ENCODE measurements at regions of chr13 and their contacts with region 1.

Region 1: DNA sequence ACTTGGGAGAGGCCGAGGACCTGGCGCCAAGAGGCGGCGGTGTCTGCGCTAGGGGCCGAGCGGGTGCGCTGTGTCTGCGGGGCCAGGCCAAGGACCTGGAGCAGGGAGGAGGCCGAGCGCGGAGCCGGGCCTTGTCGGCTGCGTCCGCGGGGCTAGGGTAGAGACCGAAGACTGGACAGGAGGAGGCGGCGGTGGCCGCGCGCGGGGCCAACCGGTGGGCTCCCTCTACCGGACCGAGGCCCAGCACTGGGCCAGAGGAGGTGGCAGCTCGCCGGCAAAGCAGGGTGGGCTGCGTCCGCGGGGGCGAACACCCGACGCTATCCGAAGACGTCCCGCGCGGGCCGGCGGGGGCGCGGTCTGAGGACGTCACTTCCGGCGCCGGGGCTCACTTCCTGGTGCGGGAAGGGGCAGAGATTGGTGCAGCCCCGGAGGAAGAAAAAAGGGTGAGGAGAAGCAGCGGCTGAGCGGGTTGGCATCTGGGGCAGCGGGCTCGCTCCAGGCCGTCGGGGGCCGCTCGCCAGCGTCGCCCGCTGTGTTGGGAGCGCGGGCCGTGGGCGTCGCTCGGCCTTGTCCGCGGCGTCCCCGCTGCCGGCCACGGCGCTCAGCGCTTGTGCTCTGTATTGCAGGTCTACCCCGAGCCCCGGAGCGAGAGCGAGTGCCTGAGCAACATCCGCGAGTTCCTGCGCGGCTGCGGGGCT is 38.3 kb downstream of the ARHGEF7 start:
- DNase-seq: peak; percentile 89
- ATAC-seq: peak; percentile 91
- H3K4me3 ChIP-seq: peak overlapping the region; percentile 80
- H3K27ac ChIP-seq: peak overlapping the region; percentile 90
- H3K4me1 ChIP-seq: peaks cover 7% of the 10 kb centered on the region
- H3K27me3 ChIP-seq: peaks cover 7% of the 10 kb centered on the region; the same call in 1 of the 2 replicates
- CTCF ChIP-seq: peak; percentile 49
- POLR2A ChIP-seq: peak; percentile 85; the same call in 1 of the 2 replicates
- RAD21 ChIP-seq: peak; percentile 33

Region 2: GRCh38 chr13:110037925-110038573 is 1115.4 kb before region 1 on chr13:
- CTCF ChIA-PET with region 1: no interaction called
- POLR2A ChIA-PET with region 1: no interaction called
- dilution Hi-C with region 1: no loop called
- in situ Hi-C with region 1: no loop called
- intact Hi-C with region 1: no loop called
- DNase-seq: no peak
- ATAC-seq: no peak
- H3K4me3 ChIP-seq: no peak overlapping the region
- H3K27ac ChIP-seq: no peak overlapping the region
- H3K4me1 ChIP-seq: peaks cover 7% of the 10 kb centered on the region
- H3K27me3 ChIP-seq: no peaks in the 10 kb centered on the region
- CTCF ChIP-seq: no peak
- POLR2A ChIP-seq: no peak
- RAD21 ChIP-seq: no peak

Region 3: DNA sequence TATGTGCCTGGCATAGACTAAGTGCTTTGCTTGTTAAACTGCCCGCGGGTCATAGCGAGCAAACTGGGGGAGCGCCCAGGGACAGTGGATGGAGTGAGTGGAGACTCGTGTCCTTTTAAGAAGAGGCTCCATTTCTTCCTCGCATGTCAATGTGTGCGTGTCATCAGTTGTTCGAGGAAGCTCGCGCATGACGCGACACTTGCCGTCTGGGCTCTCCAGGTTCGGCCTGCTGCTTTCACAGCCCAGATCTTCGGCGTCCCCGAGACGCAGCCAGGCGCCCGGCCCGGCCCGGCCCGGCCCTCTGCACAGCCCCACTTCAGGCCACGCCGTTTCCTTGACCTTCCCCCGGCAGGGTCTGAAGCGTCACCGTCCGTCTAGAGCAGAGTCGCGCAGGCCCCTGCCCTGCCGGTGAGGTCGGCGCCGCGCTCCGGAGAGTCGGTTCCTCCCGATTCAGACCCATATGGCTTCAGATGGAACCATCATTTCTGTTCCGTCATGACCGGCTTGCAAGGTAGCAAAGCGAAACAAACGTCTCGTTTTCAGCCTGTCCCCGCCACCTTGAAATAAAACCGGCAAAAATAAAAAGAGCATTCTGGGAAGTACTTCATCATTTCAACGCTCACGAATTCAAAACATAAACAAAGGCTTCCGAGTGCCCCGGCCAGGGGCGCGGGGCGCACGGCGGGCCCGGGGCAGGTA is 38.9 kb before region 1 on chr13:
- CTCF ChIA-PET with region 1: no interaction called
- POLR2A ChIA-PET with region 1: no interaction called
- dilution Hi-C with region 1: no loop called
- in situ Hi-C with region 1: no loop called
- intact Hi-C with region 1: loop called (anchors 1 kb)
- DNase-seq: peak; percentile 43
- ATAC-seq: peak; percentile 46
- H3K4me3 ChIP-seq: peak overlapping the region; percentile 53
- H3K27ac ChIP-seq: no peak overlapping the region
- H3K4me1 ChIP-seq: peaks cover under 1% of the 10 kb centered on the region; the same call in 1 of the 2 replicates
- H3K27me3 ChIP-seq: peaks cover 69% of the 10 kb centered on the region
- CTCF ChIP-seq: no peak
- POLR2A ChIP-seq: no peak
- RAD21 ChIP-seq: no peak

Region 4: GRCh38 chr13:111204438-111205177 is 51.2 kb after region 1 on chr13:
- CTCF ChIA-PET with region 1: no interaction called
- POLR2A ChIA-PET with region 1: no interaction called
- dilution Hi-C with region 1: no loop called
- in situ Hi-C with region 1: no loop called
- intact Hi-C with region 1: loop called (anchors 1 kb)
- DNase-seq: peak; percentile 84
- ATAC-seq: peak; percentile 76
- H3K4me3 ChIP-seq: no peak overlapping the region
- H3K27ac ChIP-seq: peak overlapping the region; percentile 76
- H3K4me1 ChIP-seq: peaks cover 19% of the 10 kb centered on the region
- H3K27me3 ChIP-seq: no peaks in the 10 kb centered on the region
- CTCF ChIP-seq: no peak
- POLR2A ChIP-seq: no peak
- RAD21 ChIP-seq: no peak

Region 5: GRCh38 chr13:111219280-111219679 is 65.9 kb after region 1 on chr13:
- CTCF ChIA-PET with region 1: interaction called, 5 read pairs
- POLR2A ChIA-PET with region 1: no interaction called
- dilution Hi-C with region 1: no loop called
- in situ Hi-C with region 1: no loop called
- intact Hi-C with region 1: loop called (anchors 1 kb)
- DNase-seq: peak; percentile 88
- ATAC-seq: peak; percentile 75
- H3K4me3 ChIP-seq: no peak overlapping the region
- H3K27ac ChIP-seq: peak overlapping the region; percentile 49; the same call in 1 of the 2 replicates
- H3K4me1 ChIP-seq: peaks cover 10% of the 10 kb centered on the region
- H3K27me3 ChIP-seq: no peaks in the 10 kb centered on the region
- CTCF ChIP-seq: no peak
- POLR2A ChIP-seq: no peak
- RAD21 ChIP-seq: no peak

Region 6: GRCh38 chr13:111281751-111282311 is 128.4 kb after region 1 on chr13:
- CTCF ChIA-PET with region 1: no interaction called
- POLR2A ChIA-PET with region 1: no interaction called
- dilution Hi-C with region 1: no loop called
- in situ Hi-C with region 1: no loop called
- intact Hi-C with region 1: loop called (anchors 1 kb)
- DNase-seq: peak; percentile 85
- ATAC-seq: peak; percentile 69
- H3K4me3 ChIP-seq: no peak overlapping the region
- H3K27ac ChIP-seq: peak overlapping the region; percentile 49
- H3K4me1 ChIP-seq: peaks cover 11% of the 10 kb centered on the region
- H3K27me3 ChIP-seq: no peaks in the 10 kb centered on the region
- CTCF ChIP-seq: no peak
- POLR2A ChIP-seq: peak; percentile 55; the same call in 1 of the 2 replicates
- RAD21 ChIP-seq: no peak

Region 7: GRCh38 chr13:111327730-111328573 is 174.5 kb after region 1 on chr13:
- CTCF ChIA-PET with region 1: no interaction called
- POLR2A ChIA-PET with region 1: no interaction called
- dilution Hi-C with region 1: no loop called
- in situ Hi-C with region 1: no loop called
- intact Hi-C with region 1: no loop called
- DNase-seq: no peak
- ATAC-seq: no peak
- H3K4me3 ChIP-seq: no peak overlapping the region
- H3K27ac ChIP-seq: no peak overlapping the region
- H3K4me1 ChIP-seq: no peaks in the 10 kb centered on the region
- H3K27me3 ChIP-seq: peaks cover 6% of the 10 kb centered on the region; the same call in 1 of the 2 replicates
- CTCF ChIP-seq: no peak
- POLR2A ChIP-seq: no peak
- RAD21 ChIP-seq: no peak

Measured in IMR-90 (cell line).